WTC11 (cell line): ENCODE measurements at regions of chr21 and their contacts with region 1.

Region 1: DNA sequence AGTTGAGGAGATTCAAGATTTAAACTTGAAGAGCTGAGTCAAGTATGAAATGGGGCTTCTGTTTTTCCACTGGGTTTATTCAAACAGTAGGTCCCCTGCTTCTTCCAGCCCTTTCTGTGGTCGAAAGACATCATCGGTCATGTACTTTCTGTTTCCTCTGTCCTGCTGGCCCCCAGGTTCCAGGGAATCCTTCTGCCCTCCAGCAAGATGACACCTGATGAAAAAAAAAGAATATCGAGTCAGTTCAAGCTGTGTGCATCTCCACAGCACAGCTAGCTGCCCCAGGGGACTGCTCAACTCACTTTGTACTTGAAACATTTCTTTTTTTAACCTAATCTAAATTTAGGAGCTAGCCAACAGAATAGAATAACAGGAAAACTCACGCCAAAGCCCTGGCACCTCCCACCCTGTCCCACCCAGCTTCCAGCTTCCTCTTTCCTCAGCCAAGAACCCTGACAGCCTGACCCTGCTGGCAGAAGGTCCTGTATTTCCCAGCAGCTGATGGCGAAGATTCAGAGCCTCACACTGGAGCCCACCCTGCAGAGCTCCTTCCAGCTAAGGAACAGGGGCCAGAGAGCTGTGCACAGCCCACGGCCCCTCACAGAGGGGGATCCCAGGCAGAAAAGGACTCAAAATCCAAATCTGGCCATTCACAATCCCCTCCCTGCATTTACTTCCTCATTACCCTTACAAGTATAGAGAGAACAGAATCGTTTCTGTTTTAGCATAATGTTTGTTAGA is 176.5 kb downstream of the PSMG1 start:
- DNase-seq: no peak
- ATAC-seq: peak; percentile 20
- H3K4me3 Mint-ChIP-seq: no peak overlapping the region
- H3K27ac Mint-ChIP-seq: no peak overlapping the region
- H3K4me1 Mint-ChIP-seq: peaks cover 40% of the 10 kb centered on the region
- H3K27me3 Mint-ChIP-seq: no peaks in the 10 kb centered on the region
- CTCF ChIP-seq: no peak

Region 2: GRCh38 chr21:38805328-38806152 is 201.2 kb before region 1 on chr21 and contains the start of gene ETS2:
- CTCF ChIA-PET with region 1: no interaction called
- POLR2A ChIA-PET with region 1: no interaction called
- DNase-seq: peak; percentile 81
- ATAC-seq: peak; percentile 80
- H3K4me3 Mint-ChIP-seq: peak within 1 kb of the TSS; percentile 94
- H3K27ac Mint-ChIP-seq: peak within 1 kb of the TSS; percentile 36; the same call in 1 of the 2 replicates
- H3K4me1 Mint-ChIP-seq: peaks cover 40% of the 10 kb centered on the region
- H3K27me3 Mint-ChIP-seq: peaks cover 6% of the 10 kb centered on the region
- CTCF ChIP-seq: no peak
- total RNA-seq, gene ETS2: 45.0 to 56.4 TPM (median 48.3 TPM) in 3 replicates

Region 3: DNA sequence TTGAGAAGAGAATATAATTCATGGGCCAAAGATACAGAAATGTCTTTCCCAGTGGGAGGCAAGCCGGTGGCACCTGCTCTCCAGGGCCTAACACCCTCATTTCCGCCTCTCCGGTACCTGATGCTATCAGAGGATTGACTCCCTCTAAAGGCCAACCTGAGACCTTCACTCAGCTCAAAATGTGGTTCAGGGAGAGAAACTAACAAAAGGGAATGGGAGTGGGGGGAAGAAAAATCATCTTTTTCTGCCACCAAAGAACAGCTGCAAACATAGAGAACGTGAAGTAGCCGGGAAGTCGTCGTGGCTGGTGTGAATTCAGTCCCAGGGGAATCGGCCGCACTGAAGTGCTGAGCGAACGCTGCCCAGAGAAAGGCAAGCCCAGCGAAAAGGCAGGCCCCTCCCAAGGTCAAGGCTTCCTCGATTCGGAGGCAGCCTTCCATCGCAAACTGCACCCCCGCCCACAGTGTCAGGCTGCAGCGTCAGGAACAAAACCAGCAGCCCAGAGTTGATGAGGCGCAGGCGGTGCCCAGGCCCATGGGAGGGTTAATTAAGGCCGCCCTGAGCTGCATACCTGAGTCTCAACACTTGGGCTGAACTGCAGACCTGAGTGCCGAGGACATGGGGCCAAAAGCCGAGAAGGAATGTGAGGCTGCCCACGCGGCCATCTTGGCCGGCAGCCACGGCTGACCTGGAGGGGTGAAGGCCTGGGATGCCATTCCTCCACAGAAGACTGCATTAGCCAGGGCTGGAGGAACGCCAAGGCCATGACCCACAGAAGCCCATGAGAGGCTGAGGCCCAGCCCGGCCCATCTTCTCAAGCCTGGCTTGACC is 16.3 kb after region 1 on chr21:
- CTCF ChIA-PET with region 1: interaction called, 15 read pairs
- POLR2A ChIA-PET with region 1: no interaction called
- DNase-seq: no peak
- ATAC-seq: peak; percentile 82
- H3K4me3 Mint-ChIP-seq: no peak overlapping the region
- H3K27ac Mint-ChIP-seq: peak overlapping the region; percentile 77
- H3K4me1 Mint-ChIP-seq: peaks cover 42% of the 10 kb centered on the region
- H3K27me3 Mint-ChIP-seq: no peaks in the 10 kb centered on the region; the same call in 1 of the 2 replicates
- CTCF ChIP-seq: no peak

Region 4: DNA sequence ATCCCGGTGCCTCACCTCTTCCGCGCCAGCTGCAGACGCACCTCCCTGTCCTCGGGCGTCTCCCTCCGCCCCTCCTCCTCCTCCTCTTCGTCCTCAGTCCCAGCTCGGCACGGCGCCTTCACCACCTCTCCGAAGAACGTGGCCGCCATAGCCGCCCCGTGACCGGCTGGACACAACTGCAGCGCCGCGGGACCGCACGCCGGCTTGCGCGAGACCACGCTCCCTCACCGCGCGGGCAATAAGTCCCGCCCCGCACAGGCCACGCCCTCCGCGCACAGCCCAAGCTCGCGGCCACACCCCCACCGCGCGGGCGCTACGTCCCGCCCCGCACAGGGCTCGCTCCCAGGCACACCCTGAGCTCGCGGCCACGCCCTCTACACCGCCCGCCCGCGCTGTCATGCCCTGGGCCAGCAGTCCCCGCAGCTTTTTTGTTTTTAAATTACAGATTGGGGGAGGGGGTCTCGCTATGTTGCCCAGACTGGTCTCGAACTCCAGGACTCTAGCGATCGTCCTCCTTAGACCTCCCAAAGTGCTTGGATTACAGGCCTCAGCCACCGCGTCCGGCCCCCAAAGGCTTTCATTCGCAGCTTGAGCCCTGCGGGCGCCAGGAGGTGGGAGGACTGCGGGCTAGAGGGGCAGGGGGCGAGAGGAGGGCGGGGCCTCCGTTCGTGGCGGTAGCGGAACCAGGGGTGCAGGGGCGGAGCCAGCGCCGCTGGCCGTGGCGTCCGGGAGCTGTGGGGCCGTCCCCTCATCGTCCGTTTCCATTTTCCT is 176.7 kb after region 1 on chr21 and contains the start of gene PSMG1:
- CTCF ChIA-PET with region 1: no interaction called
- POLR2A ChIA-PET with region 1: interaction called, 10 read pairs
- DNase-seq: peak; percentile 96
- ATAC-seq: peak; percentile 93
- H3K4me3 Mint-ChIP-seq: peak within 1 kb of the TSS; percentile 92
- H3K27ac Mint-ChIP-seq: peak within 1 kb of the TSS; percentile 95
- H3K4me1 Mint-ChIP-seq: peaks cover 39% of the 10 kb centered on the region
- H3K27me3 Mint-ChIP-seq: no peaks in the 10 kb centered on the region
- CTCF ChIP-seq: no peak
- total RNA-seq, gene PSMG1: 64.0 to 70.4 TPM (median 68.6 TPM) in 3 replicates